ENCODE measurements at regions of chr3 and their contacts with region 1.

Region 1: DNA sequence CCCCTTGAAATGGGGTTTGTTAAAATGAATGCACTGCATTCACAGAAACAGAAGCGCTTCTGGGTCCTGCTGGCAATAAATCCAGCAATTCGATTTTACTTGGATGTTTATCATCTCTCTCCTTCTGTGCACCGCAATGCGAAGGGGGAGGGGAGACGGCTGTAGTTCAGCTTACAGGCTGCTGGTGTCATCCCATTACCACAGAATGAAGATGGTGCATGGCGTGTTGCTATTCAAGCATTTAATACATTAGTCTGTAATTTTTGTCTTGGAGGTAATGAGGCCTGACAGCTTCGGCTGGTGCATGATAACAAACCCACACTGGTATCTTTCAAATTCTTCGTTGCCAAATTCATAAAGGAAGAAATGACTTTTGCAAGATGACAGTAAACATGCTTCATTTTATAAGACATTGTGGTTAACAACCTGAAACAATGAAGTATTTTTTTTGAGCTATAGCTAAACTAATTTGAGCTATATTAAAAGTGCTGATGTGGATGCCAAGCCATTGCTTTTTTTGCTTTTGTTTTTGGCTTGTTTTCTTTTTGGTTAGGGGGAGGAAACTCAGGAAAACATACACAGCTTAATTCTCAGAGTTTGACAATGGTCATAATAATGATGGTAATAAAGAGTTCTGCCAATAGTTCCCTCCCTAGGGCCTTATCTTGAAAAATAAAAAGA is 418.3 kb downstream of the OTOL1 start:
- DNase-seq: peak; percentile 5
- ATAC-seq: peak; percentile 84

Region 2: DNA sequence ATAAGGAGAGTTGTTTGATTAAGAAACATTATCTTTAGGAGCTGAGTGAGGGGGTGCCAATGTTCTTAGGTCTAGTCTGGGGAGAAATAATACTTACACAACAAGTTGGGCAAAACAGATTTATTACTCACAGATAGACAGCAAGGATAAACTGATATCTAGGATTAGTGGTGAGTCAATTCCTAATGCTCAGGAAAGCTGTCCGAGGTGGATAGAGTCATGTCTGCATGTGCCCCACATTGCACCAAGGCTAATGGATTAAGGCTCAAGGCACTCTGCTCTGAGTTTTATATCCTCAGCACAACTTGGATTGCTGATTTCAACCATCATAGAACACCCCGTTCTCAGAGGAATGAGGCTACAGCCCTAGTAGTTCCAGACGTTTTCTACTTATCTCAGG is 624.0 kb after region 1 on chr3:
- intact Hi-C with region 1: no loop called
- DNase-seq: no peak
- ATAC-seq: no peak

Region 3: GRCh38 chr3:163056874-163057497 is 1142.1 kb after region 1 on chr3:
- intact Hi-C with region 1: loop called (anchors 10 kb)
- DNase-seq: no peak
- ATAC-seq: no peak